ENCODE measurements at regions of chr11 and their contacts with region 1.

Region 1: GRCh38 chr11:7098235-7098832 is 9.5 kb downstream of the RBMXL2 start:
- DNase-seq: peak; percentile 55
- H3K4me3 ChIP-seq: peak overlapping the region in 1 of 2 experiments; percentile 16; a peak in 1 of 4 replicates
- H3K27ac ChIP-seq: no peak overlapping the region
- H3K4me1 ChIP-seq: no peaks in the 10 kb centered on the region
- H3K27me3 ChIP-seq: no peaks in the 10 kb centered on the region
- CTCF ChIP-seq: peak; percentile 77
- EP300 ChIP-seq: no peak
- RAD21 ChIP-seq: peak; percentile 94

Region 2: DNA sequence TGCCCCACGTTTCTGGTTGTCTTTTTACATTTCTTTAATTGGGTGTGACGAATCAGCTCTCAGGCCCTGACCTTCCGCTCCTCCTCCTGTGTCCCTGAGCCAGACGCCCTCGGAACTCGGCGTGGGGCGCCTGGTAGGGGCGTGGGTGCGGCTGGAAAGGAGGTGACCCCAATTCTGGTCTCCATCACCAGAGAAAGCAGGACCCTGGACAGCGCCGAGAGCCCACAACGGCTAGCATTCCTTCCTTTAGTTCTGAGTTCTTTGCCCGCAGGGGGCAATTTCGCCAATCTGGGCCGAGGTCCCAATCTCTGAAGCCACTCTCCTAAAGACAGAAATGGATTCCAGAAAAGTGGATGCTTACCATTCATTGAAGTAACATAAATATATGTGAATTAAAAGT is 21.2 kb before region 1 on chr11:
- CTCF ChIA-PET with region 1: no interaction called
- POLR2A ChIA-PET with region 1: no interaction called
- DNase-seq: no peak
- H3K4me3 ChIP-seq: no peak overlapping the region
- H3K27ac ChIP-seq: no peak overlapping the region
- H3K4me1 ChIP-seq: no peaks in the 10 kb centered on the region
- H3K27me3 ChIP-seq: no peaks in the 10 kb centered on the region; the same call in 1 of the 2 replicates
- CTCF ChIP-seq: no peak
- EP300 ChIP-seq: no peak
- RAD21 ChIP-seq: no peak

Region 3: DNA sequence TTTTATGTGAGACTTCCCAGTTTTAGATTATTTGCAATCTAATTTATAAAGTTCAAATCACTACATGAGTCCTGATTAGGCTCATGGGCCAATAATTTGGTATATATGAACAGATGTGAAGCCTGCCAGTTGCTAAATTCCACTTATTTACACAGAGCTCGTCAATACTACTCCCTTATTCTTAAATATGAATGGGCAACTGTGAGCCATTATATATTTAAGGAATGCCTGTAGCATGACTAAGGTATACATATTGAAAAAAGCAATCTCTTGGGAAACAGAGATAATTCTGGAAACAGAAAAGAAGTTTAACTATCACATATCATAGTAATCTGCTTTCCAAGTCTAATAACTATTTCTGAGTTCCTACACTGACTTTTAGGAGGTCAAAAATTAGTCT is 17.4 kb after region 1 on chr11:
- CTCF ChIA-PET with region 1: interaction called, 20 read pairs
- POLR2A ChIA-PET with region 1: no interaction called
- DNase-seq: no peak
- H3K4me3 ChIP-seq: no peak overlapping the region
- H3K27ac ChIP-seq: no peak overlapping the region
- H3K4me1 ChIP-seq: no peaks in the 10 kb centered on the region
- H3K27me3 ChIP-seq: no peaks in the 10 kb centered on the region
- CTCF ChIP-seq: no peak
- EP300 ChIP-seq: no peak
- RAD21 ChIP-seq: no peak

Region 4: DNA sequence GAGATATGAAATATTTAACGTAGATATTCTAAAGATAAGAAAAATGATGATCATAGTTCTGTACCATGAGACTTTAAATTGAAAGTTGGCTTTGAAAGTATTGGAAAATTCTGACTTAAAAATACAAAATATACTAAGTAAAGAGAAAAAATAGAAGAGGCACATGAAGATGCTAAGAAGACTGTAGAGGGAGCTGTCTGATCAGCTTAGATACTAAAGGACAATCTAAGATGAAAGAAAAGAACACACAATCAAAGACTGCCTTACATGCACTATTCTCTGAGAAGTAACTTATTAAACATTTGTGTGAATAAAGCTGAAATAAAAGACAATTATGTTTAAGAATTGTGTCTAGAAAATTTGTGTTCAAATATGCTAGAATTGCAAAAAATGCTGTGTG is 45.6 kb after region 1 on chr11:
- CTCF ChIA-PET with region 1: interaction called, 13 read pairs
- POLR2A ChIA-PET with region 1: no interaction called
- DNase-seq: no peak
- H3K4me3 ChIP-seq: no peak overlapping the region
- H3K27ac ChIP-seq: no peak overlapping the region
- H3K4me1 ChIP-seq: no peaks in the 10 kb centered on the region
- H3K27me3 ChIP-seq: no peaks in the 10 kb centered on the region
- CTCF ChIP-seq: peak; percentile 54
- EP300 ChIP-seq: no peak
- RAD21 ChIP-seq: peak; percentile 84

Region 5: DNA sequence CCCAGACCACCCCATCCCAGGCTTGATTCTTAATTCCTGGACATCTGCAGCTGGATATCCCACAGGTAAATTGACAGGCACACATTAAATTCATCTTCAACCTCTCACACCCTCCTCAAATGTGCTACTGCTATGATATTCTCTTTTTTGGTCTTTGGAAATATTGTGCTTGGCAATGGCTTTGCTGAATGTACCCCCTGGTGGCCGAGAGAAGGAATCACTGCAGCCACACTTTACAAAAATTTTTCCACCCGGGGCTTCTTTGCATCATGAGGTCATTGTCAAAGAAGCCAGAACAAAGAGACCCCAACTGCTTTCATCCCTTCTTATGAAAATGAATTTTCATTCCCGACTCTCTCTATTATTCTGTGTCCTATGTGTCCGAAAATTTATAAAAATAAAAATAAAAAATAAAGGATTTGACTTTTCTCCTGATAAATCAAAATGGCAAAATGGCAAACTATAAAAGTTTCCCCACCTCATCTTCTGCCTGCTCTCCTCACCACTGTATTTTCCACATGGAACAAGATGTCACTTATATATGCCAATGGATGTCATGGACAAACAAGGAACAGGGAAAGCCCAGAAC is 590.0 kb after region 1 on chr11:
- CTCF ChIA-PET with region 1: interaction called, 11 read pairs
- POLR2A ChIA-PET with region 1: no interaction called
- DNase-seq: peak; percentile 52
- H3K4me3 ChIP-seq: no peak overlapping the region; a peak in 1 of 4 replicates
- H3K27ac ChIP-seq: no peak overlapping the region
- H3K4me1 ChIP-seq: no peaks in the 10 kb centered on the region
- H3K27me3 ChIP-seq: peaks cover 21% of the 10 kb centered on the region; the same call in 1 of the 2 replicates
- CTCF ChIP-seq: peak; percentile 80
- EP300 ChIP-seq: no peak
- RAD21 ChIP-seq: peak; percentile 69

Region 6: DNA sequence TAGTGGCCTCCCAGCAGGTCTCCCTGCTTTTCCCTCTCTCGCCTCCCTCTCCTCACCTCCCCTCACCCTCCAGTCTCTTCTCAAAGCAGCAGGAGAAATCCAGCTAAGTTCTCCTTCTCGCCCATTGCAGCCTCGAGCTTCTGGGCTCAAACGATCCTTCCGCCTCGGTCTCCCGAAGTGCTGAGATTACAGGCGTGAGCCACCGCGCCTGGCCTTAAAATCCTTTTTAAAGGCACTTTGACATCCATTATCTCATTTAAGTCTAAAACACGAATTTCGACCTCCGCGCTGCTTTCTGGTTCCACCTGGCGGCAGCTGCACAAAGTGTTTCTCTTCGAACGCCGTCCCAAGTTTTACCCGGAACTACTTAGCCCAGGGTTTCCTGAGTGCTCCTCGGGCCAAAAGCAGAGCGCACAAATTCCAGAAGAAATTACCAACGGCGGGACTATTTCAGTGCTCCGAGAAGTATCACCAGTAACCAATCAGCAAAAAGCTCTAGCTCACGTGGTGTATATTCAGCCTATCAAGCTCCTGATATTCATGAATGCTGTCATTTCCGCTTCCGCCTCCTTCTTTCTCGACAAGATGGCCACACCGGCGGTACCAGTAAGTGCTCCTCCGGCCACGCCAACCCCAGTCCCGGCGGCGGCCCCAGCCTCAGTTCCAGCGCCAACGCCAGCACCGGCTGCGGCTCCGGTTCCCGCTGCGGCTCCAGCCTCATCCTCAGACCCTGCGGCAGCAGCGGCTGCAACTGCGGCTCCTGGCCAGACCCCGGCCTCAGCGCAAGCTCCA is 888.6 kb after region 1 on chr11 and contains the start of gene EIF3F:
- CTCF ChIA-PET with region 1: interaction called, 15 read pairs
- POLR2A ChIA-PET with region 1: no interaction called
- DNase-seq: peak; percentile 93
- H3K4me3 ChIP-seq: peak within 1 kb of the TSS; percentile 88 to 96
- H3K27ac ChIP-seq: peak within 1 kb of the TSS in 1 of 2 experiments; percentile 52; a peak in 3 of 4 replicates
- H3K4me1 ChIP-seq: peaks cover 7 to 12% of the 10 kb centered on the region in 2 experiments
- H3K27me3 ChIP-seq: no peaks in the 10 kb centered on the region
- CTCF ChIP-seq: peak; percentile 91
- EP300 ChIP-seq: peak; percentile 30 to 46; a peak in 3 of 4 replicates
- RAD21 ChIP-seq: peak; percentile 76
- polyA plus RNA-seq, gene EIF3F: 213 and 341 TPM in 2 replicates

Measured in SK-N-SH (cell line).